Tibial artery (tissue), 4 donors: ENCODE measurements at regions of chr3 and their contacts with region 1.

Region 1: GRCh38 chr3:132682201-132682600 is 22.1 kb downstream of the UBA5 start:
- DNase-seq: no peak
- H3K4me3 ChIP-seq: no peak overlapping the region
- H3K27ac ChIP-seq: no peak overlapping the region
- H3K4me1 ChIP-seq: no peaks in the 10 kb centered on the region
- H3K27me3 ChIP-seq: no peaks in the 10 kb centered on the region
- CTCF ChIP-seq: no peak

Region 2: GRCh38 chr3:132317229-132317948 is 364.8 kb before region 1 on chr3 and contains the start of gene ACP3:
- intact Hi-C with region 1: no loop called
- DNase-seq: peak; percentile 59 to 69
- H3K4me3 ChIP-seq: peak within 1 kb of the TSS in 1 of 2 donors; percentile 3
- H3K27ac ChIP-seq: no peak within 1 kb of the TSS
- H3K4me1 ChIP-seq: peaks cover 0 to 8% (median 0%) of the 10 kb centered on the region in 4 donors
- H3K27me3 ChIP-seq: peaks cover 0 to 3% of the 10 kb centered on the region in 2 donors
- CTCF ChIP-seq: no peak

Region 3: GRCh38 chr3:132695422-132695821 is 13.2 kb after region 1 on chr3:
- intact Hi-C with region 1: loop called (anchors 2 kb)
- DNase-seq: no peak
- H3K4me3 ChIP-seq: no peak overlapping the region
- H3K27ac ChIP-seq: no peak overlapping the region
- H3K4me1 ChIP-seq: no peaks in the 10 kb centered on the region
- H3K27me3 ChIP-seq: no peaks in the 10 kb centered on the region
- CTCF ChIP-seq: no peak